ENCODE measurements at regions of chr6 and their contacts with region 1.

Region 1: DNA sequence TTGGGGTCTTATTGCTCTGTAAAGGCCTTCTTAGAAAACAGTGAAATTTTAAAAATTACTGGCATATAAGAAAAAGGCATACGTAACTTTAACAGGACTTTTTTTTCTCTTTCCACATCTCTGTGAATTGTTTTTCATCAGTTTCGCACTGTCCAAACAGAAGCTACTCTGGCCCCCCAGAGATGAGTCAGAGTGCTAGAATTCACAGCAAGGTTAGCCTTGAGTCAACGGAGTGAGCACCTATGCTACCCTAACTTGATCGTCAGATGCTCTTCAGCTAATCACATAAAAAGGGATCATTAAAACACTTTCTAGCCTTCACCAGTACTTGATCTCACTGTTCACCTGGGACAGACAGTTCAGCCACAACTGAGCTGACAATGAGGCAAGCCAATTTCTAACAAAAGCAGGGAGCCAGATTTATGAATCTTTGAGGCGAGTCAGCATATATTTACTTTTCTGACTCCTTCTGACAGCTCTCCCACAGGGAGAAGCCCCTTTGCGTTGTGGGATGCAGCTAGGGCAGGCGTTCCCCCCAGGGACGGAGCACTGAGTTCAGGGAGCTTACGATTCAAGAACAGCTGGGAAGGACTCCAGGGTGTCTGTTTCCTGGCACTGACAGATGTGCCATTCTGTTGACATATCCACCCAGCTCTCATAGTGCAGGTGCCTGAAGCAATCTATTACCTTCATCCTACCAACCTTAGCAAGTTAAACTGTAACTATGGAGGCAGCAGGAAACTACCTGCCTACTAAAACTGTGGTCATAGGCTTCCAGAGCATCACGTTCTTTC is 46.4 kb upstream of the SPDEF start:
- DNase-seq: no peak
- ATAC-seq: no peak
- H3K4me3 ChIP-seq: no peak overlapping the region
- H3K27ac ChIP-seq: no peak overlapping the region
- H3K4me1 ChIP-seq: peaks cover 0 to 9% of the 10 kb centered on the region in 2 donors
- H3K27me3 ChIP-seq: no peaks in the 10 kb centered on the region

Region 2: GRCh38 chr6:34161857-34162515 is 440.5 kb before region 1 on chr6:
- intact Hi-C with region 1: loop called (anchors 10 kb)
- DNase-seq: peak in 1 of 2 donors; percentile 57
- ATAC-seq: peak; percentile 38
- H3K4me3 ChIP-seq: no peak overlapping the region
- H3K27ac ChIP-seq: no peak overlapping the region
- H3K4me1 ChIP-seq: no peaks in the 10 kb centered on the region
- H3K27me3 ChIP-seq: no peaks in the 10 kb centered on the region

Region 3: DNA sequence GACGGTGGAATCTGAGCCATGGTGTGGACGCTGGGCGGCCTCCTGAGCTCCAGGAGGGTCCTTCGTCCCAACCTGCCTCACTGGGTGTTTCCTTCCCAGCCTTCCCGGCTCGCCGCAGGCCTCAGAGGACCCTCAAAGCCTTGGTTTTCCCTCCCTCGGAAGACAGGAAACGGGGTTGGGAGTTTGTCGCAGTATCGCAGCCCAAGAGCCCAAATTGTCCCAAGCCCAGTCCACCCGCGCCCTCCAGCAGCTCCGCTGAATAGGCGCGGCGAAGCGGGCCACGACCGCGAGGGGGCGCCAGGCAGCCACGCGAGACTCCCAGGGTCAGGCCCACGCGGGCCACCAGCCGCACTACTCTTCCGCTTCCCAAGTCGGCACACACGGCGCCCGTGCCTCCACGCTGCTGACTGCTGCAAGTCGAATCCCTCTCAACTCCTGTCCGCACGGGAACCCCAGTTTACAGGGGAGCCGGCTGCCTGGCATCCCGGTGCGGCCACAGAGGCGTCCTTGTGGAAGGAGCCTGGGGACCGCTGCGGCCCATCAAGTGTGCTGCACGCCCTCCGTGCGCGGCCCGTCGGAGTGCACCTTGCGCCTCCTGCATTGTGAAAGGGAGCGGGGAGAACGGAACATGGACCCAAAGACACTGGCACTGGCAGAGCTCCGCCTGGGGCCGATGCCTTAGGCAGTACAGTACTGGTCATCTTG is 406.2 kb before region 1 on chr6:
- intact Hi-C with region 1: loop called (anchors 10 kb)
- DNase-seq: peak; percentile 92 to 98
- ATAC-seq: peak; percentile 98
- H3K4me3 ChIP-seq: peak overlapping the region in 1 of 2 donors; percentile 3
- H3K27ac ChIP-seq: no peak overlapping the region
- H3K4me1 ChIP-seq: no peaks in the 10 kb centered on the region
- H3K27me3 ChIP-seq: no peaks in the 10 kb centered on the region

Region 4: GRCh38 chr6:34414999-34415858 is 187.3 kb before region 1 on chr6:
- intact Hi-C with region 1: loop called in 1 of 2 experiments (anchors 10 kb)
- DNase-seq: peak in 1 of 2 donors; percentile 69
- ATAC-seq: peak; percentile 94
- H3K4me3 ChIP-seq: no peak overlapping the region
- H3K27ac ChIP-seq: peak overlapping the region; percentile 65 to 70
- H3K4me1 ChIP-seq: no peaks in the 10 kb centered on the region
- H3K27me3 ChIP-seq: no peaks in the 10 kb centered on the region